ENCODE measurements at regions of chr11 and their contacts with region 1.

Region 1: GRCh38 chr11:113113801-113114706 is 152.8 kb downstream of the NCAM1 start:
- DNase-seq: peak; percentile 49
- H3K4me3 ChIP-seq: no peak overlapping the region
- H3K27ac ChIP-seq: no peak overlapping the region
- H3K4me1 ChIP-seq: no peaks in the 10 kb centered on the region
- H3K27me3 ChIP-seq: peaks cover 7% of the 10 kb centered on the region
- CTCF ChIP-seq: peak; percentile 76 to 93

Region 2: GRCh38 chr11:112837162-112837826 is 276.8 kb before region 1 on chr11:
- CTCF ChIA-PET with region 1: no interaction called
- dilution Hi-C with region 1: no loop called
- in situ Hi-C with region 1: no loop called
- intact Hi-C with region 1: loop called (anchors 1 kb)
- DNase-seq: no peak
- H3K4me3 ChIP-seq: no peak overlapping the region
- H3K27ac ChIP-seq: no peak overlapping the region
- H3K4me1 ChIP-seq: peaks cover 8% of the 10 kb centered on the region
- H3K27me3 ChIP-seq: no peaks in the 10 kb centered on the region
- CTCF ChIP-seq: peak in 1 of 2 donors; percentile 29

Region 3: GRCh38 chr11:112881461-112881860 is 232.6 kb before region 1 on chr11:
- CTCF ChIA-PET with region 1: no interaction called
- dilution Hi-C with region 1: no loop called
- in situ Hi-C with region 1: no loop called
- intact Hi-C with region 1: loop called (anchors 5 kb)
- DNase-seq: peak; percentile 66
- H3K4me3 ChIP-seq: peak overlapping the region in 2 of 3 experiments; percentile 22 to 30
- H3K27ac ChIP-seq: no peak overlapping the region
- H3K4me1 ChIP-seq: no peaks in the 10 kb centered on the region
- H3K27me3 ChIP-seq: no peaks in the 10 kb centered on the region
- CTCF ChIP-seq: no peak

Region 4: GRCh38 chr11:113314389-113315301 is 200.6 kb after region 1 on chr11 and contains the start of gene TTC12:
- CTCF ChIA-PET with region 1: no interaction called
- dilution Hi-C with region 1: no loop called
- in situ Hi-C with region 1: no loop called
- intact Hi-C with region 1: no loop called
- DNase-seq: peak; percentile 94
- H3K4me3 ChIP-seq: peak within 1 kb of the TSS; percentile 68 to 95 (median 89)
- H3K27ac ChIP-seq: peak within 1 kb of the TSS; percentile 95
- H3K4me1 ChIP-seq: peaks cover 35% of the 10 kb centered on the region
- H3K27me3 ChIP-seq: no peaks in the 10 kb centered on the region
- CTCF ChIP-seq: no peak
- total RNA-seq, gene TTC12: 32.5 to 36.5 TPM

Region 5: GRCh38 chr11:113401716-113402115 is 287.7 kb after region 1 on chr11:
- CTCF ChIA-PET with region 1: no interaction called
- dilution Hi-C with region 1: no loop called
- in situ Hi-C with region 1: no loop called
- intact Hi-C with region 1: no loop called
- DNase-seq: peak; percentile 97
- H3K4me3 ChIP-seq: no peak overlapping the region
- H3K27ac ChIP-seq: no peak overlapping the region
- H3K4me1 ChIP-seq: peaks cover 35% of the 10 kb centered on the region
- H3K27me3 ChIP-seq: no peaks in the 10 kb centered on the region
- CTCF ChIP-seq: no peak

Measured in mammary epithelial cell (primary cell).